Pancreas (tissue), 10 donors: ENCODE measurements at regions of chr3 and their contacts with region 1.

Region 1: DNA sequence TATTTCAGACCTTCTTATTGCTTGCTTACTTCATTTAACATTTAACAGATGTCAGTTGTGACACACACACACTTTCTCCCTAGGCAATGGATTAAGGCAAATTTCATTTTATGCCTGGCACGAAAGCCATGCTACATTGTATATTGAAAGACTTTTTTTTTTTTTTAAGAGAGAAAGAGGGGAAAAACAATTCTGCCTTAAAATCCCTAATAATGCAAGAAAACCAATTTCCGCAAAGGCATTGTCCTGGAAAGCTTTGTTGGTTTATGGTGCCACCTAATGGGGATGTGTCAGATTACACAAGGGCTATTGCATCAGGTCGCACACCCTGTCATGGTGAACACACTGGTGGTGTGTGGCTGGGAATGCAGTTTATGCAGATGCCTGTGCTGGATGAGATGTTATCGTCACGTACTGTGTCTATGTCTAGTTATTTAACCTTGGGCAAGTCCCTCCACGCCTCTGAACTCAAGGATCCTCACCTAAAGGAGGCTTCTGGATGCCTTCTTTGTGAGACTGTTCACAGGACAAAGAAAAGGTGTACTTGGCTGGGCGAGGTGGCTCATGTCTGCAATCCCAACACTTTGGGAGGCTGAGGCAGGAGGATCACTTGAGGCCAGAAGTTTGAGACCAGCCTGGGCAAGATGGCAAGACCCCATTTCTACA is 37.3 kb upstream of the RFTN1 start:
- DNase-seq: peak in 4 of 6 donors; percentile 38 to 86 (median 52)
- ATAC-seq: peak; percentile 89 to 100 (median 97)
- H3K4me3 ChIP-seq: peak overlapping the region in 2 of 4 donors; percentile 17 to 29
- H3K27ac ChIP-seq: no peak overlapping the region
- H3K4me1 ChIP-seq: no peaks in the 10 kb centered on the region
- H3K27me3 ChIP-seq: no peaks in the 10 kb centered on the region
- CTCF ChIP-seq: peak; percentile 54 to 85 (median 74)

Region 2: DNA sequence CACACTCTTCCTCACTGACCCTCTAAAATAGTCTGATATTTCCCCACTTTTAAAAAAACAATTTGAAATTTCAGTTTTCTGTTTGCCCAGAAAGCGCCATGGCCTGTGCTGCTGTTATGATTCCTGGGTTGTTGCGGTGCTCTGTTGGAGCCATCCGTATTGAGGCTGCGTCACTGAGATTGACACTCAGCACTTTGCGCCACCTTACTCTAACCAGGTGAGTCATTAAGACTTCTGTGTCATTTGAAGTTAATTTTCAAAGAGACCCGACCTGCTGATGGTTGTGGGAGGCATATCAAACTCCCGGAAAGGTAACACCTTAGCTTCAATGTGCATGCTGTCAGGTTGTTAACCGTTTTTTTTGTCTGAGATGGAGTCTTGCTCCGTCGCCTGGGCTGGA is 280.0 kb before region 1 on chr3:
- intact Hi-C with region 1: loop called in 1 of 3 experiments (anchors 5 kb)
- DNase-seq: no peak
- ATAC-seq: no peak
- H3K4me3 ChIP-seq: no peak overlapping the region
- H3K27ac ChIP-seq: no peak overlapping the region
- H3K4me1 ChIP-seq: peaks cover 2 to 22% (median 8%) of the 10 kb centered on the region in 3 donors
- H3K27me3 ChIP-seq: no peaks in the 10 kb centered on the region
- CTCF ChIP-seq: no peak

Region 3: DNA sequence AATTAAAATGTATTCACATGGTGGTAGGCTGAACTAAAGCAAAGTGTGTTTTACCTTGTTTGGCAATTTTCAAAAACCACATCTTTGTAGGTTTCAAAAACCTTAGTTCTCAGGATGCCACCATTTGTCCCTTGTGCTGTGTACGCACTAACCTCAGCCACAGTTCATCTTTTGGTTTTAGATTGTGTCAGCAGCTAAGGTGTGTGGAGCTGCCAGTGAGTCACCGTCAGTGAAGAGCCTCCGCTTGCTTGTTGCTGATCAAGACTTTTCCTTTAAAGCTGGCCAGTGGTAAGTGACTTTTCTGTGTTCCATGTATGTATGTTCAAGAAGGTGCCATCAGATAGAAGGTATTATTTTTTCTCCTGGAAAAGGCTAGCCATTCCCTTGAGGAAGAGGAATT is 264.6 kb before region 1 on chr3:
- intact Hi-C with region 1: loop called in 2 of 3 experiments (anchors 5 to 10 kb)
- DNase-seq: no peak
- ATAC-seq: peak in 1 of 4 donors; percentile 58
- H3K4me3 ChIP-seq: no peak overlapping the region
- H3K27ac ChIP-seq: no peak overlapping the region
- H3K4me1 ChIP-seq: no peaks in the 10 kb centered on the region
- H3K27me3 ChIP-seq: no peaks in the 10 kb centered on the region
- CTCF ChIP-seq: no peak